PC-9 (cell line): ENCODE measurements at regions of chr1 and their contacts with region 1.

Region 1: GRCh38 chr1:211281320-211282022 is 22.3 kb downstream of the RCOR3 start:
- DNase-seq: no peak
- H3K4me3 ChIP-seq: no peak overlapping the region
- H3K27ac ChIP-seq: peak overlapping the region; percentile 29; the same call in 1 of the 2 replicates
- H3K4me1 ChIP-seq: no peaks in the 10 kb centered on the region
- H3K27me3 ChIP-seq: no peaks in the 10 kb centered on the region
- CTCF ChIP-seq: no peak

Region 2: DNA sequence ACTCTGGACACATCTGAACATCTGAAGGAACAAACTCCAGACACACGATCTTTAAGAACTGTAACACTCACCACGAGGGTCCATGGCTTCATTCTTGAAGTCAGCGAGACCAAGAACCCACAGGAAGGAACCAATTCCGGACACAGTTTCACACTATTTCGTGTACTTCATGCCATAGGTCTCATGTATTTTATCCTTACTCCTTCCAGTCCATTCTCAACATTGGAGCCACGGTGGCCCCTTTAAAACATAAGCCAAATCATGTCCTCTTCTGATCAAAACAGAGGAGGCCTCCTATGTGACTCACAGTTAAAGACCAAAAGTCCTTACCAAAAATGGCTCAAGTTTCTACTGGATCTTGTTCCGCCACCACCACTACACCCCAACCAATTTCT is 52.1 kb before region 1 on chr1:
- CTCF ChIA-PET with region 1: no interaction called
- POLR2A ChIA-PET with region 1: no interaction called
- intact Hi-C with region 1: no loop called
- DNase-seq: no peak
- H3K4me3 ChIP-seq: no peak overlapping the region
- H3K27ac ChIP-seq: no peak overlapping the region
- H3K4me1 ChIP-seq: no peaks in the 10 kb centered on the region
- H3K27me3 ChIP-seq: no peaks in the 10 kb centered on the region
- CTCF ChIP-seq: no peak

Region 3: GRCh38 chr1:211675230-211676105 is 394.0 kb after region 1 on chr1 and contains the start of gene NEK2:
- CTCF ChIA-PET with region 1: interaction called, 13 read pairs
- POLR2A ChIA-PET with region 1: no interaction called
- intact Hi-C with region 1: no loop called
- DNase-seq: peak; percentile 93 to 97
- H3K4me3 ChIP-seq: peak within 1 kb of the TSS; percentile 81
- H3K27ac ChIP-seq: peak within 1 kb of the TSS; percentile 57
- H3K4me1 ChIP-seq: peaks cover 30% of the 10 kb centered on the region
- H3K27me3 ChIP-seq: no peaks in the 10 kb centered on the region
- CTCF ChIP-seq: no peak
- total RNA-seq, gene NEK2: 56.0 and 60.5 TPM in 2 replicates

Region 4: DNA sequence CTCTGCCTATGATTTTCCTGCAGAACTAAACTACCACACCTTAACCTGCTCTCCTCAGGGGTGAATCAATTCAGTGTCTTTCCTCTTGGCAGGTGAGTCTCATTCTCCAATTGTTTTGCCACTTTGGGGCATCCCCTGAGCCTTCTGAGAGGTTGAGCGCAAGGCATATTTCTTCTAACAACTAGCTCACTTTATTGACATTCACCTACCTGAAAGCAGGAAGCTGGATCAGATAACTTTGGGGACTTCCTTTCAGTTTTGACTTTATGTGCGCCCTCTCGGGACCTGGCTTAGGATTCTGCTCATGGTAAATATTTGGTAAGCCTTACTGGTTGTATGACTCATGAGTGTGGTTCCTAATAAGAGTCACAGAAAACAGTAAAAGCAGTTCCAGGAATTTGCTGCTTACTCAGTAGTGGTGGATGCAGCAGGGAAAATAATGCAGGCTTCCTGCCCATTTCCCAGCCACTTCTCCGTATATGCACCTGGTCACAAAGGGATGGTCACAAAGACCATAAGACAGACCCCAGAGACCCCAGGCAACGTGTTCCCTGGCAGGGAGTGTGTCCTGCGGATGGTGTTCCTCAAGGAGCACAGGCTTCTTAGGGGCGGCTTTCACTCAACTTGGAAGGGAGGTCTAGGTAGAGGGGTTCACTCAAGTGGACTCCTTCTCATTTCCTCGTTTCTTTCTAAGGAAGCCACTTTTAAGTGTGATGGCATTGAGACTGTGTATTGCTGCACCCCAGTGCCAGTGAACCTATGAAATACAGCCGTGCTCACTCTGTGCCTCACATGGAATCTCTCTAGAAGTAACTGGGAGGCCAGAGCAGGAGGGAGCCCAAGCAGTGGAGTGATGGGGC is 1440.1 kb after region 1 on chr1:
- CTCF ChIA-PET with region 1: no interaction called
- POLR2A ChIA-PET with region 1: no interaction called
- intact Hi-C with region 1: no loop called
- DNase-seq: peak; percentile 61 to 89
- H3K4me3 ChIP-seq: peak overlapping the region; percentile 1; the same call in 1 of the 2 replicates
- H3K27ac ChIP-seq: 0 out of 2 replicates have a peak overlapping the region, but pooled peaks have one; percentile 4
- H3K4me1 ChIP-seq: peaks cover 15% of the 10 kb centered on the region
- H3K27me3 ChIP-seq: no peaks in the 10 kb centered on the region
- CTCF ChIP-seq: no peak